ENCODE measurements at regions of chr13 and their contacts with region 1.

Region 1: DNA sequence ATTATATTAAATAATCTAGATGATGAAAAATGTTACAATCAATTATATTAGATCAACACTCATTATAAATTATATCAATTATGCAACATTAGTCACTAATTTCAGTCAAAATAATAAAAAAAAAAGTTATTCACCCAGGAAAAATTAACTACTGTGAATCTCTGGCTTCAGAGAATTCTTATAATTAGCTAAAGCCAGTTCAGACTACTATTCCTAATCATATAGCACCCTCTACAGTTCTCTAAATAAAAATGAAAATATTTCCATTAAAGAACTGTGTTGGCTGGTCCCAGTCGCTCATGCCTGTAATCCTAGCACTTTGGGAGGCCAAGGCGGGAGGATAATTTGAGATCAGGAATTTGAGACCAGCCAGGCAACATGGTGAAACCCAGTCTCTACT is 33.0 kb downstream of the XPO4 start:
- DNase-seq: no peak
- H3K4me3 ChIP-seq: no peak overlapping the region
- H3K27ac ChIP-seq: no peak overlapping the region
- H3K4me1 ChIP-seq: no peaks in the 10 kb centered on the region
- H3K27me3 ChIP-seq: no peaks in the 10 kb centered on the region
- CTCF ChIP-seq: no peak
- EP300 ChIP-seq: no peak
- POLR2A ChIP-seq: no peak

Region 2: DNA sequence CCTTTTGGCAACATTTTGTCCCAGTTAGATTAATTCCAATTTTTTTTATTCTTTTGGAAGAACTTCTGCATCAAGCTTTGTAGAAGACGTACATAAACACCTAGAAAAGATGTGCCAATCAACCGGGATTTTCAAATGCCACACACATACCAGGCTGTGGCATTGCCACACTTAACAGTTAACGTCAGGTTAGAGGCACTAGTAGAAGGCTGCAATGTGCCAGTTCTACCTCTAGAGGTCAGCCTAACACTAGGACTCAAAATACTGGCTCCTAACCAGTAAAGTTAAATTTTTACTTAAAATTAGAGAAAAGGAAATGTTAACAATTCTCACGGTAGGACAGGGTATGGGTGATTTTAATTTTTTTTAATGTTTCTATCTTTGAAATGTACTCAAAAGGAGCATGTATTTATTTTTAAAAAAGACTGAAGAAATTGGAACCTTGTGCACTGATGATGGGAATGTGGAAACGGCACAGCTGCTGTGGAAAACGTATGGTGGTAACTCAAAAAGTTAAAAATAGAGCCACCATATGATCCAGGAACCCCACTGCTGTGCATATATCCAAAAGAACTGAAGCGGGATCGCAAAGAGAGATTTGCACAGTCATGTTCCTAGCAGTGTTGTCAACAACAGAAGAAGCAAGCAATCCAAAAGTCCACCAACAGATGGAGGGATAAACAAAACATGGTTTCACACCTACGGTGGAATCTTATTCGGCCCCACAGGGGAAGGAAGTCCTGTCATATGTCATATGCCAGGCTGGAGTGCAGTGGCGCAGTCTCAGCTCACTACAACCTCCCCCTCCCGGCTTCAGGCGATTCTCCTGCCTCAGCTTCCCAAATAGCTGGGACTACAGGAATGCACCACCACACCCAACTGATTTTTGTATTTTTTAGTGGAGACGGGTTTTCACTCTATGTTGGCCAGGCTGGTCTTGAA is 374.2 kb before region 1 on chr13:
- in situ Hi-C with region 1: no loop called
- intact Hi-C with region 1: no loop called
- DNase-seq: peak; percentile 73
- H3K4me3 ChIP-seq: no peak overlapping the region
- H3K27ac ChIP-seq: peak overlapping the region in 2 of 4 donors; percentile 25 to 34
- H3K4me1 ChIP-seq: peaks cover 5 to 13% (median 8%) of the 10 kb centered on the region in 4 donors
- H3K27me3 ChIP-seq: no peaks in the 10 kb centered on the region
- CTCF ChIP-seq: peak; percentile 91 to 98 (median 94)
- EP300 ChIP-seq: no peak
- POLR2A ChIP-seq: peak; percentile 12

Region 3: DNA sequence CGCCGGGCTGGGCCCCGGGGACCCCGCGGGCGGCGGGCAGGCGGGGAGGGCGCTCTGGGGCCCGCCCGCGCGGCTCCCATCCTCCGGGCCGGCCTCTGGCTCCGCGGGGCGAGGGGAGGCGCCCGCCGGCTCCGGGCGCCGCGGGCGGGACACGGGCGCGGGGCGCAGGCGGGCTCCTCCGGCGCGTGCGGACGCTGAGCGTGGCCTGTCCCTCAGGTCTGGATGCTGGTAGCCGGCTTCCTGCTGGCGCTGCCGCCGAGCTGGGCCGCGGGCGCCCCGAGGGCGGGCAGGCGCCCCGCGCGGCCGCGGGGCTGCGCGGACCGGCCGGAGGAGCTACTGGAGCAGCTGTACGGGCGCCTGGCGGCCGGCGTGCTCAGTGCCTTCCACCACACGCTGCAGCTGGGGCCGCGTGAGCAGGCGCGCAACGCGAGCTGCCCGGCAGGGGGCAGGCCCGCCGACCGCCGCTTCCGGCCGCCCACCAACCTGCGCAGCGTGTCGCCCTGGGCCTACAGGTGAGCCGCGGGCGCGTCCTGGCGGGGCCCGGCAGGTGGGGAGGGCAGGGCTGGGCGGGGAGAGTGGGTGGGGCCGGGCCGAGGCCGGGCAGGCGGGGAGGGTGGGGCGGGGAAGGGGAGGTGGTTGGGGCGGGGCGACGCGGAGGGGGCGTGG is 165.6 kb before region 1 on chr13:
- in situ Hi-C with region 1: no loop called
- intact Hi-C with region 1: no loop called
- DNase-seq: peak; percentile 87
- H3K4me3 ChIP-seq: peak overlapping the region; percentile 29 to 66 (median 42)
- H3K27ac ChIP-seq: peak overlapping the region in 3 of 4 donors; percentile 37 to 74 (median 55)
- H3K4me1 ChIP-seq: peaks cover 0 to 16% (median 12%) of the 10 kb centered on the region in 4 donors
- H3K27me3 ChIP-seq: peaks cover 25% of the 10 kb centered on the region
- CTCF ChIP-seq: peak in 4 of 5 experiments; percentile 44 to 66 (median 50)
- EP300 ChIP-seq: no peak
- POLR2A ChIP-seq: no peak

Region 4: DNA sequence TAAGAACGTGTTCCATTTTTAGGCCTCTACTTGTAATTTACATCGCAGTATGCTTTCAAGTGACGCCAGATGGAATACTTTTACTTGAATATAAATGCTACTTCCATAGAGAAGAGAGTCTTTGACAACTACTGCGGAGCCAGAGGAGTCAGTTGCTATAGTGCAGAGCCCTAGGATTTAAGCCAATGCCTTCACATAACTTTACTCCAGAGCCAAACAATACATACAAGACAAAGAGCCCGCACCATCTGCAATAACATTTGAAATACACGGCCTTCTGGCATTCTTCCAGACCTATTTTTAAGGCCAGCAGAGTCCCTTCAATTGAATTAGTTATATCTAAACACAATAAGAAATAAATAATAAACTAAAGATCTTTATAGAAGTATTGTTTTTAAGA is 26.4 kb before region 1 on chr13:
- in situ Hi-C with region 1: no loop called
- intact Hi-C with region 1: loop called (anchors 1 kb)
- DNase-seq: no peak
- H3K4me3 ChIP-seq: no peak overlapping the region
- H3K27ac ChIP-seq: no peak overlapping the region
- H3K4me1 ChIP-seq: peaks cover 0 to 10% (median 7%) of the 10 kb centered on the region in 4 donors
- H3K27me3 ChIP-seq: no peaks in the 10 kb centered on the region
- CTCF ChIP-seq: no peak
- EP300 ChIP-seq: no peak
- POLR2A ChIP-seq: no peak

Region 5: GRCh38 chr13:22194106-22194805 is 1324.7 kb after region 1 on chr13:
- in situ Hi-C with region 1: no loop called
- intact Hi-C with region 1: loop called (anchors 5 kb)
- DNase-seq: no peak
- H3K4me3 ChIP-seq: no peak overlapping the region
- H3K27ac ChIP-seq: no peak overlapping the region
- H3K4me1 ChIP-seq: peaks cover 3 to 12% (median 8%) of the 10 kb centered on the region in 4 donors
- H3K27me3 ChIP-seq: no peaks in the 10 kb centered on the region
- CTCF ChIP-seq: no peak
- EP300 ChIP-seq: no peak
- POLR2A ChIP-seq: no peak